PC-9 (cell line): ENCODE measurements at regions of chr3 and their contacts with region 1.

Region 1: DNA sequence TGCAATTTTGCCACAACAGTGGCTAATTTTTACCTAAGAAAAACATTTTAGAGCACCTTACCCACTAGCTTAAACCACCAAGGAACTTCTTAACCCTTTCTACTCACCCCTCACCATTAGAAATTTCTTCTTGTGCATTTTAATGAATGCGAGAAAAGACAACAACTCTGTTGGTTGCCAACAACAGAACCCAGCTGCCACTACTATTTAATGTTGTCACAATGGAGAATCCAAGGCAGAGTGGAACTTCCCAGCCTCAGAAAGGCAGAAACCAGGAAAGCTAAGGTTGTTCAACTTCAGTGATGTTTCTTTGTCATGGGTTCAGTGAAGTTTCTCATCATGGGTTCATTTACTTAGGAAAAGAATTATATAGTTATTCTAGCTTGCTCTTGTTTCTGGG is 325.2 kb upstream of the ARL6 start:
- DNase-seq: no peak
- H3K4me3 ChIP-seq: no peak overlapping the region
- H3K27ac ChIP-seq: no peak overlapping the region
- H3K4me1 ChIP-seq: no peaks in the 10 kb centered on the region
- H3K27me3 ChIP-seq: no peaks in the 10 kb centered on the region
- CTCF ChIP-seq: no peak

Region 2: GRCh38 chr3:98657457-98657856 is 1218.1 kb after region 1 on chr3:
- CTCF ChIA-PET with region 1: no interaction called
- POLR2A ChIA-PET with region 1: interaction called, 20 read pairs
- intact Hi-C with region 1: no loop called
- DNase-seq: peak in 1 of 2 experiments; percentile 26
- H3K4me3 ChIP-seq: no peak overlapping the region; the same call in 1 of the 2 replicates
- H3K27ac ChIP-seq: no peak overlapping the region
- H3K4me1 ChIP-seq: no peaks in the 10 kb centered on the region
- H3K27me3 ChIP-seq: no peaks in the 10 kb centered on the region
- CTCF ChIP-seq: no peak; the same call in 1 of the 2 replicates